Activated CD4-positive, alpha-beta T cell treated with anti-CD3 and anti-CD28 coated beads, Interleukin-2, amount 10 ng/mL, durations not matched to agents 24 days and 14 days (primary cell): ENCODE measurements at regions of chr7 and their contacts with region 1.

Region 1: GRCh38 chr7:24882989-24883621 is 96.9 kb downstream of the OSBPL3 start:
- DNase-seq: no peak
- H3K4me3 Mint-ChIP-seq: peak overlapping the region; percentile 25
- H3K27ac Mint-ChIP-seq: peak overlapping the region; percentile 75
- H3K4me1 Mint-ChIP-seq: peaks cover 72% of the 10 kb centered on the region
- H3K27me3 Mint-ChIP-seq: no peaks in the 10 kb centered on the region

Region 2: GRCh38 chr7:24609059-24609458 is 274.0 kb before region 1 on chr7:
- intact Hi-C with region 1: no loop called
- DNase-seq: no peak
- H3K4me3 Mint-ChIP-seq: no peak overlapping the region
- H3K27ac Mint-ChIP-seq: no peak overlapping the region
- H3K4me1 Mint-ChIP-seq: peaks cover 14% of the 10 kb centered on the region
- H3K27me3 Mint-ChIP-seq: no peaks in the 10 kb centered on the region

Region 3: DNA sequence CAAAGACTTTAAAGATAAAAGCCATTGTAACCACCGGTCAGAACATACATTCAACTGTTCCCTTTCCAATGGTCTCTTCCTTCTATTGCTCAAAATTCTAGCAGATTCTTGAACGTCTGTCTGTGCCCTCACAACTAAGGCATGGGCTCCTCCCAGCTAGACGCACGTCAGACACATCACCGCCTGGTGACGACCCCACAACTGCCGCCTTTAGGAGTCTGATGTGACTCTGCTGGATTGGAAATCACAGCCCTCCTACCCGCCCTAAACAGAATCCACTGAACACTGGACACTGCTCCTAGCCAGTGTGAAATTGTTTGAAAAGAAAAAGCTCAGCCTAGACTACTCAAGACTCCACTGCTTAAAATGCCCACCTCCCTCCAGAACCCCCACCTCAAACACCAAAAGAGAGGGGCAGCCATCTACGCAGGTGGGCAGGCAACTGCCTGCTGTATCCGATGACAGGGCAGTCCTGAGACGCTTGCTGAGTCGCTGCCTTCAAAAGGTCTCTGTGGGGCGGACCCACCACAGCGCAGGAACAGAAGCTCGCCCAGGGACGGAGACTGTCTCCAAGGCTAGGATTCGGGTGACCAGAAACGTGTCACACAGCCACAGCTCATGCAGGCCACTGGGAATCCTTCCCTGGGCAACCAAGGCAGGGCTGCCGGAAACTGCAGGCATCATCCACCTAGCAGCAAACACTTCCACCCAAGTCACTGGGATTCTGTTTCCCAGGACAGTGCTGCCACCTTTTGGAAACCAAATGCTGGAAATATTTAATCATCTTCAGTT is 160.5 kb before region 1 on chr7:
- intact Hi-C with region 1: no loop called
- DNase-seq: no peak
- H3K4me3 Mint-ChIP-seq: no peak overlapping the region
- H3K27ac Mint-ChIP-seq: no peak overlapping the region
- H3K4me1 Mint-ChIP-seq: peaks cover 11% of the 10 kb centered on the region
- H3K27me3 Mint-ChIP-seq: peaks cover 2% of the 10 kb centered on the region

Region 4: DNA sequence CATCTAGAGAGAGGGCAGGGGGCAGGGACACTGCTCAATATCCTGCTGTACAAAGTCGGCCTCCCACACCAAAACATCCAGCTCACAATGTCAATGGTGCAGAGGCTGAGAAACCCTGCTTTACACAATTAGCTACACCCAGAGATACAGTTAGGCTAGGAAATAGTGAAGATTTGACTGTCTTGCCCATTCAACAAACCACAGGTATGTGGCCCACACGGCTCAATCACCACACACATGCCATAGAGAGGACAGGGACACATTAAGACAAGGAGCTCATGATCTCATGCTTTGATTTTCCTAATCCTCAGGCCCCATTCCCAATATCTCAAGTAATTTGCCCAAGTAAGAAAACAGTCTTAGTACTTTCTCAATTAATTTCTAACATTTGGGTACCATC is 13.5 kb before region 1 on chr7:
- intact Hi-C with region 1: loop called (anchors 2 kb)
- DNase-seq: no peak
- H3K4me3 Mint-ChIP-seq: no peak overlapping the region
- H3K27ac Mint-ChIP-seq: peak overlapping the region; percentile 2
- H3K4me1 Mint-ChIP-seq: peaks cover 43% of the 10 kb centered on the region
- H3K27me3 Mint-ChIP-seq: no peaks in the 10 kb centered on the region

Region 5: DNA sequence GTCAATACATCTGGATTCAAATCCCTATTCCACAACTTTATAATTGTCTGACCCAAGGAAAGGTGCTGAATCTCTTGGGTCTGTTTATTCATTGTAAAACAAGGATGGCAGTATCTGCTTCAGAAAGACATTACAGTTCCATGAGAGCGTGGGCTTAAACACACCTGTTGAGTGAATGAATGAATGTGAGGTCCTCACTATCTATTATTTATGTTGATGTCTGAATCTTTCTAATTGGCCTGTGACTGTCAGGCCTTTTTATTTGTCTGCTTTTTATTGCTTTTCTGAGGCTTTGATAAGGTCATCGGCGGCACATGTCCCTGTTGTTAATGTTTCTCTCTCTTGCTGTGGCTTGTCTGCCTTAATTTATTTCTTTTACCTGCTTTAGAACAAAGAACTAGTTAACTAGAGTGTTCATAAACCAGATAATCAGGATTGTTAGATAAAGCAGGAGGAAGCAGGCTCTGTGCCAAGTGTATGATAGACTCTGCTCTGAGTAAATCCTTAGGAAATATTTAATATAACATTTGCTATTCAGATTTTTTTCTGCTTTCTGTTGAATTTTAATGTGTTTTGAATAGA is 284.2 kb after region 1 on chr7:
- intact Hi-C with region 1: no loop called
- DNase-seq: no peak
- H3K4me3 Mint-ChIP-seq: no peak overlapping the region
- H3K27ac Mint-ChIP-seq: no peak overlapping the region
- H3K4me1 Mint-ChIP-seq: no peaks in the 10 kb centered on the region
- H3K27me3 Mint-ChIP-seq: no peaks in the 10 kb centered on the region